ENCODE measurements at regions of chr19 and their contacts with region 1.

Region 1: GRCh38 chr19:9914315-9915207 is 21.8 kb downstream of the OLFM2 start:
- DNase-seq: peak; percentile 77
- H3K4me3 ChIP-seq: peak overlapping the region; percentile 45 to 53 (median 46)
- H3K27ac ChIP-seq: no peak overlapping the region
- H3K4me1 ChIP-seq: peaks cover 6% of the 10 kb centered on the region
- H3K27me3 ChIP-seq: peaks cover 8% of the 10 kb centered on the region
- CTCF ChIP-seq: peak; percentile 12 to 62

Region 2: GRCh38 chr19:9205501-9206113 is 709.0 kb before region 1 on chr19:
- CTCF ChIA-PET with region 1: no interaction called
- dilution Hi-C with region 1: no loop called
- in situ Hi-C with region 1: no loop called
- intact Hi-C with region 1: loop called (anchors 1 kb)
- DNase-seq: peak; percentile 53
- H3K4me3 ChIP-seq: peak overlapping the region; percentile 21 to 33 (median 27)
- H3K27ac ChIP-seq: no peak overlapping the region
- H3K4me1 ChIP-seq: no peaks in the 10 kb centered on the region
- H3K27me3 ChIP-seq: no peaks in the 10 kb centered on the region
- CTCF ChIP-seq: peak; percentile 71 to 89

Region 3: DNA sequence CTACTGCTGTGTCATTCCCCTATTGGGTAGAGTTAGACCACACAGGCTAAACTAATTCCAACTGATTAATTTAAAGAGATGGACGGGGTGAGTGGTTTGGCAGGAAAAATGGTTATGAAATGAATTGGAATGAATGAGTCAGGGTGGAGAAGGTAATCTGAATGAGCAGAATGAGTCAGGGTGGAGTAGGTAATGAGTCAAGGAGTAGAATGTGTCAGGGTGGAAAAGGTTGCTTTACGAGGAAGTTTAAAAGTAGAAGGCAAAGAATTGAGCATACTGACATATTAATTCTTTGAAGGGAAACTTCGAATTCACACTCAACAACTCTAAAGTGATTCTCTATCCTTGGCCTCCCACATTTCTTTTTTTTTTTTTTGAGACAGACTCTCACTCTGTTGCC is 317.5 kb before region 1 on chr19:
- CTCF ChIA-PET with region 1: no interaction called
- dilution Hi-C with region 1: no loop called
- in situ Hi-C with region 1: no loop called
- intact Hi-C with region 1: loop called (anchors 10 kb)
- DNase-seq: peak; percentile 96
- H3K4me3 ChIP-seq: no peak overlapping the region
- H3K27ac ChIP-seq: peak overlapping the region; percentile 17
- H3K4me1 ChIP-seq: peaks cover 15% of the 10 kb centered on the region
- H3K27me3 ChIP-seq: no peaks in the 10 kb centered on the region
- CTCF ChIP-seq: no peak

Region 4: GRCh38 chr19:9847087-9847671 is 67.4 kb before region 1 on chr19:
- CTCF ChIA-PET with region 1: no interaction called
- dilution Hi-C with region 1: no loop called
- in situ Hi-C with region 1: no loop called
- intact Hi-C with region 1: loop called (anchors 1 kb)
- DNase-seq: peak; percentile 71
- H3K4me3 ChIP-seq: no peak overlapping the region
- H3K27ac ChIP-seq: no peak overlapping the region
- H3K4me1 ChIP-seq: no peaks in the 10 kb centered on the region
- H3K27me3 ChIP-seq: no peaks in the 10 kb centered on the region
- CTCF ChIP-seq: peak; percentile 70 to 78

Region 5: DNA sequence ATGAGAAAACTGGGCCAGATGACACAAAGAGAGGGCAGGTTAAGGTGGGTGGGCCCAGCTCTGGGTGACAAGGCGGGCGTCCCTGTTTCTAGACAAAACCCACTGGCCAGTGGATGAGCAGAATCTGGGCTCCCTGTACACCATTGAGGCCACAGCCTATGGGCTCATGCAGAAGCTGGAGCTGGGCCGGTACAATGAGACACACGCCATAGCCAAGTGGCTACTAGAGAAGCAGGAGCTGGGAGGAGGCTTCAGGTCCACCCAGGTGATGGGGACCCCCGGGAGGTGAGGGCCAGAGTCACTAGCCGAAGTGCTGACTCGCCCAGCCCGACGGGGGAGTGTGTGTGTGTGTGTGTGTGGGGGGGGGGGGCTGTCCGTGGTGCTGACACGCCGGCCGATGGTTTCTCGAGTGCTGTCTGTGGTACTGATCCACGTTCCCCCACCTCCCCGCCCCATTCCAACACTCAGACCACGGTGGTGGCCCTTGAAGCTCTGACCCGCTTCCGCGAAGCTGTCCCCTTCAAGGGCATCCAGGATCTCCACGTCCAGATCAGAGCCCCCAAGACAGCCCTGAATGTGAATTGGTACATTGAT is 147.3 kb after region 1 on chr19:
- CTCF ChIA-PET with region 1: no interaction called
- dilution Hi-C with region 1: no loop called
- in situ Hi-C with region 1: no loop called
- intact Hi-C with region 1: no loop called
- DNase-seq: no peak
- H3K4me3 ChIP-seq: no peak overlapping the region
- H3K27ac ChIP-seq: no peak overlapping the region
- H3K4me1 ChIP-seq: no peaks in the 10 kb centered on the region
- H3K27me3 ChIP-seq: no peaks in the 10 kb centered on the region
- CTCF ChIP-seq: no peak

Measured in mammary epithelial cell (primary cell).